Psoas muscle (tissue), 8 donors: ENCODE measurements at regions of chrX and their contacts with region 1.

Region 1: GRCh38 chrX:40755291-40756249 is 20.2 kb upstream of the MED14 start:
- DNase-seq: peak; percentile 69 to 94
- ATAC-seq: peak; percentile 93 to 96 (median 94)
- H3K4me3 ChIP-seq: peak overlapping the region; percentile 49
- H3K27ac ChIP-seq: peak overlapping the region; percentile 90
- H3K4me1 ChIP-seq: peaks cover 16% of the 10 kb centered on the region
- H3K27me3 ChIP-seq: peaks cover 0 to 10% (median 0%) of the 10 kb centered on the region in 3 donors
- CTCF ChIP-seq: no peak

Region 2: GRCh38 chrX:40867352-40867751 is 111.8 kb after region 1 on chrX:
- intact Hi-C with region 1: loop called in 1 of 2 experiments (anchors 10 kb)
- DNase-seq: no peak
- ATAC-seq: peak; percentile 45 to 60 (median 54)
- H3K4me3 ChIP-seq: no peak overlapping the region
- H3K27ac ChIP-seq: peak overlapping the region; percentile 72
- H3K4me1 ChIP-seq: peaks cover 28% of the 10 kb centered on the region
- H3K27me3 ChIP-seq: peaks cover 0 to 3% (median 0%) of the 10 kb centered on the region in 3 donors
- CTCF ChIP-seq: no peak